ENCODE measurements at regions of chr4 and their contacts with region 1.

Region 1: GRCh38 chr4:119041951-119042560 is 93.6 kb upstream of the MYOZ2 start:
- DNase-seq: peak in 3 of 5 donors; percentile 45 to 58 (median 53)
- ATAC-seq: peak; percentile 13 to 71 (median 66)
- H3K4me3 ChIP-seq: no peak overlapping the region
- H3K27ac ChIP-seq: peak overlapping the region in 10 of 12 donors; percentile 27 to 91 (median 70)
- H3K4me1 ChIP-seq: peaks cover 0 to 86% (median 59%) of the 10 kb centered on the region in 12 donors
- H3K27me3 ChIP-seq: no peaks in the 10 kb centered on the region
- CTCF ChIP-seq: peak; percentile 43 to 72 (median 64)
- POLR2A ChIP-seq: no peak

Region 2: GRCh38 chr4:118757761-118758251 is 284.2 kb before region 1 on chr4:
- intact Hi-C with region 1: loop called in 2 of 10 experiments (anchors 10 kb)
- DNase-seq: no peak
- ATAC-seq: peak in 3 of 4 donors; percentile 61 to 71 (median 71)
- H3K4me3 ChIP-seq: no peak overlapping the region
- H3K27ac ChIP-seq: peak overlapping the region; percentile 26 to 87 (median 65)
- H3K4me1 ChIP-seq: peaks cover 10 to 100% (median 80%) of the 10 kb centered on the region in 12 donors
- H3K27me3 ChIP-seq: no peaks in the 10 kb centered on the region
- CTCF ChIP-seq: no peak
- POLR2A ChIP-seq: no peak

Region 3: GRCh38 chr4:119080716-119081541 is 38.9 kb after region 1 on chr4:
- intact Hi-C with region 1: loop called in 1 of 10 experiments (anchors 5 kb)
- DNase-seq: no peak
- ATAC-seq: peak in 3 of 4 donors; percentile 31 to 39 (median 33)
- H3K4me3 ChIP-seq: no peak overlapping the region
- H3K27ac ChIP-seq: peak overlapping the region in 6 of 12 donors; percentile 16 to 71 (median 46)
- H3K4me1 ChIP-seq: peaks cover 0 to 15% (median 0%) of the 10 kb centered on the region in 12 donors
- H3K27me3 ChIP-seq: no peaks in the 10 kb centered on the region
- CTCF ChIP-seq: no peak
- POLR2A ChIP-seq: no peak

Region 4: GRCh38 chr4:119113033-119113655 is 71.1 kb after region 1 on chr4:
- intact Hi-C with region 1: no loop called
- DNase-seq: no peak
- ATAC-seq: peak in 3 of 4 donors; percentile 81 to 87 (median 83)
- H3K4me3 ChIP-seq: no peak overlapping the region
- H3K27ac ChIP-seq: peak overlapping the region in 9 of 12 donors; percentile 6 to 78 (median 46)
- H3K4me1 ChIP-seq: peaks cover 0 to 36% (median 17%) of the 10 kb centered on the region in 12 donors
- H3K27me3 ChIP-seq: no peaks in the 10 kb centered on the region
- CTCF ChIP-seq: no peak
- POLR2A ChIP-seq: no peak

Region 5: GRCh38 chr4:119138046-119138445 is 96.0 kb after region 1 on chr4:
- intact Hi-C with region 1: loop called in 9 of 10 experiments (anchors 5 to 10 kb)
- DNase-seq: peak in 1 of 5 donors; percentile 41
- ATAC-seq: peak; percentile 52 to 72 (median 59)
- H3K4me3 ChIP-seq: peak overlapping the region; percentile 33 to 64 (median 48)
- H3K27ac ChIP-seq: peak overlapping the region; percentile 77 to 98 (median 88)
- H3K4me1 ChIP-seq: peaks cover 0 to 27% (median 8%) of the 10 kb centered on the region in 12 donors
- H3K27me3 ChIP-seq: no peaks in the 10 kb centered on the region
- CTCF ChIP-seq: no peak
- POLR2A ChIP-seq: no peak

Region 6: DNA sequence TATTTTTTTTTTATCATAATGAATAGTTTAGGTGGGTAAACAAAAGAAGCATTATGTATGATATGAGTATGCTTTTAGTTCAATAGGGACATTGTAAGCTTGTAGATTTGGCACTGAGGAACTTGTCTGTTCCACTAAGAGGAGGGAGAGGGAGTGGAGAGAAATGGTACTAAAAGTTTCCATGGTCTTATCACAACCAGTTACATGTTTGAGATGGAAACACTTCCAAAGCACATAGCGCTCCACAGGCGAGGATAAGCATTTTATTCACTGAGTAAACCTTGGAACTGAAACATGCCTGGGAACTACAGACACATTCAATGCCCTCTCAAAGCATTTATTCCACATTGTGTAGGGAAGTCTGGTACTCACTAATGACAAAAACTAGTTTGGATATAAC is 109.1 kb after region 1 on chr4:
- intact Hi-C with region 1: loop called in 3 of 10 experiments (anchors 5 to 10 kb)
- DNase-seq: peak in 2 of 5 donors; percentile 27 to 34
- ATAC-seq: peak; percentile 86 to 97 (median 90)
- H3K4me3 ChIP-seq: no peak overlapping the region
- H3K27ac ChIP-seq: peak overlapping the region; percentile 32 to 88 (median 71)
- H3K4me1 ChIP-seq: peaks cover 0 to 69% (median 16%) of the 10 kb centered on the region in 12 donors
- H3K27me3 ChIP-seq: no peaks in the 10 kb centered on the region
- CTCF ChIP-seq: peak in 2 of 12 donors; percentile 18 to 25
- POLR2A ChIP-seq: peak in 1 of 2 donors; percentile 20

Region 7: DNA sequence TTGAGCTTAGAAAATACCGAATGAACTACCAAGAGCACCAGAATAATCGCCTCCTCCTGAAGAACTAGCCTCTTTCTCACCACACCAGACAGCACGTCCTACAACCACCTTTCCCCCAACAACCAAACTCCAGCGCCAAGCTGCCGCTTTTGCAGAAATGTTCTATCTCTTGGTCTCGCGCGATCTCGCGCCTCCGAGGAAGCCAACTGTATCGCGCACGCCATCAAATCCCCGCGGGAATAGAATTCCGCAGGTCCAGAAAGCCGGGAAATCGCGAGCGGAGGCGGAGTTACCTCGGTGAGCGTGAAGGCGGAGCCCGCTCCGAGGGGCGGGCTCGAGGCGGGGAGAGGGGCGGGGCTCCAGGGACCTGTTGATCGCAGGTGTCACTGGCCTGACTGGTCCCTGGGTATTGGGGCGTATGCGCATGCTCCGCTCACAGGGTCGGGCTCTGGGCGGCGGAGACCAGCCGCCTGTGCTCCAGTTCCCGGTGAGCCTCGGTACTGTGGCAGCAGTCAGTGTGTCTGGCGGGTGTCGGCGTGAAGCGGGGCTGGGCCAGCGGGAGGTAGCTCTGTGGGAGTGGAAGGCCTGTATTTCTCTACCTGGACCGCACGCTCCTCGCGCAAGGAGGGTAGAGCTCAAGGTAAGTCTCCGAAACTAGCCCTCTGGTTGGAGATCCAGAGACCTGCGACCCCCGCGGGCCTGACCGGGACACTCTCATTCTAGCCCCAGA is 170.3 kb after region 1 on chr4 and contains the start of gene USP53:
- intact Hi-C with region 1: loop called in 5 of 10 experiments (anchors 5 to 10 kb)
- DNase-seq: peak; percentile 95 to 98 (median 97)
- ATAC-seq: peak; percentile 96 to 98 (median 98)
- H3K4me3 ChIP-seq: peak within 1 kb of the TSS; percentile 50 to 93 (median 83)
- H3K27ac ChIP-seq: peak within 1 kb of the TSS; percentile 88 to 99 (median 96)
- H3K4me1 ChIP-seq: peaks cover 0 to 46% (median 15%) of the 10 kb centered on the region in 12 donors
- H3K27me3 ChIP-seq: no peaks in the 10 kb centered on the region
- CTCF ChIP-seq: no peak
- POLR2A ChIP-seq: peak in 1 of 2 donors; percentile 92
- total RNA-seq, gene USP53: 32.9 to 52.9 (median 43.7) TPM

Region 8: GRCh38 chr4:119774840-119775239 is 732.8 kb after region 1 on chr4:
- intact Hi-C with region 1: no loop called
- DNase-seq: no peak
- ATAC-seq: no peak
- H3K4me3 ChIP-seq: no peak overlapping the region
- H3K27ac ChIP-seq: no peak overlapping the region
- H3K4me1 ChIP-seq: no peaks in the 10 kb centered on the region
- H3K27me3 ChIP-seq: no peaks in the 10 kb centered on the region
- CTCF ChIP-seq: no peak
- POLR2A ChIP-seq: no peak